AG04449 (cell line): ENCODE measurements at regions of chr6 and their contacts with region 1.

Region 1: DNA sequence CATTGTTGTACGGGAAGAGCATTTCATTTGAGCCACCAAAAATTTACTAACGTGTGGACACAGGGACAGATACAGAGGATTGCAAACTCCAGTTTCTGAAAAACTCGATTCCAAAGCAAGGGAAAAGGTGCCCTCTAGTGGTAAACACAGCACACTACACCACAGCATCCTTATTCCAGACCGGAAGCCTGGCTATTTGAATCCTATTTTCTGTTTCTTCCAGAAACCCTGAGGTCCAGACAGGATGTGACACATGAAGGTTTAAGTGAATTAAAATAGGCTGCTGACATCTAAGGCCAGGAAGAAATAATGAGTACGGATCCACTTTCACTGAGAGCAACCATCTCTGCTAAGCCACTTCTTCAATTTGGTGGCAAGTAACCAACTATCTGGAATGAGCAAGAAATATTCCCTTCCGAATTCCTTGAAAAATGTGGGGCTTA is 31.8 kb upstream of the GMPR start:
- DNase-seq: peak; percentile 65
- H3K4me3 ChIP-seq: no peak overlapping the region
- CTCF ChIP-seq: peak; percentile 85

Region 2: DNA sequence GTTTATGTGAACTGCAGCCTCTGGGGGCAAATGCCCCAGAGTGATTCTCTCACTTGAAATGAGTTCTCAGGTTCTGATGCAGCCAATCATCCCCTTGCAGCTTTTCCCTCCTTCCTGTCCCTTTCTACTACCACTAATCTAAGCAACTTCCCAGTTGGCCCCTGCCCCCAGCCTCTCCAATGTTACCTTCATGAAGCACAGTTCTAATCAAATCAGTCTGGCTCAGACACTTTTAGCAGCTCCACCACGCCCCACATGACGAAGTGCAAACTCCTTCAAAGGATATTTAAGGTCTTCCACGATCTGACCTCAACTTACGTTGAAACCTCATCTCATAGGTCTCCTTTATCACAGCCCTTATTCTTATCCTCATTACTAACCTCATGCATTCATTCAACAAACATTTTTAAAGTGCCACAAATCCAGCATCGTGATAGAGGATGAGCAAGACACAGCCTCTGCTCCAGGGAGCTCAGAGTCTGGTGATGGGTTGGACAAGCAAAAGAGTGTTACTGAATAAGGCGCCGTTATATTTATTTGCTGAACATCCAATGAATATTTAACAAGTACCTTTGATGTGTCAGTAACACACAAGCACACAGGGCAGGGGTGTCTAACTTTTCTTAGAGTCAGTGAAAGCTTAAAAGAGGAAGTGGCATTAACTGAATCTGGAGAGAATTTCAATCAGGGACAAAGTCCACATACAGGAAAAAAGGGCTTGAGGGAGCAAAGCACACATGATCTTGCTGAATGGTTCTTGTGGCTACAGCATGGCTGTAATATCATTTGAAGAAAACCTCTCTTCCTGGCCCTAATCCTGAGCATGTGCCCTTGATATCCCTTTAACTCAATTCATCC is 523.4 kb before region 1 on chr6:
- CTCF ChIA-PET with region 1: interaction called, 18 read pairs
- POLR2A ChIA-PET with region 1: no interaction called
- DNase-seq: no peak
- H3K4me3 ChIP-seq: no peak overlapping the region
- CTCF ChIP-seq: no peak

Region 3: DNA sequence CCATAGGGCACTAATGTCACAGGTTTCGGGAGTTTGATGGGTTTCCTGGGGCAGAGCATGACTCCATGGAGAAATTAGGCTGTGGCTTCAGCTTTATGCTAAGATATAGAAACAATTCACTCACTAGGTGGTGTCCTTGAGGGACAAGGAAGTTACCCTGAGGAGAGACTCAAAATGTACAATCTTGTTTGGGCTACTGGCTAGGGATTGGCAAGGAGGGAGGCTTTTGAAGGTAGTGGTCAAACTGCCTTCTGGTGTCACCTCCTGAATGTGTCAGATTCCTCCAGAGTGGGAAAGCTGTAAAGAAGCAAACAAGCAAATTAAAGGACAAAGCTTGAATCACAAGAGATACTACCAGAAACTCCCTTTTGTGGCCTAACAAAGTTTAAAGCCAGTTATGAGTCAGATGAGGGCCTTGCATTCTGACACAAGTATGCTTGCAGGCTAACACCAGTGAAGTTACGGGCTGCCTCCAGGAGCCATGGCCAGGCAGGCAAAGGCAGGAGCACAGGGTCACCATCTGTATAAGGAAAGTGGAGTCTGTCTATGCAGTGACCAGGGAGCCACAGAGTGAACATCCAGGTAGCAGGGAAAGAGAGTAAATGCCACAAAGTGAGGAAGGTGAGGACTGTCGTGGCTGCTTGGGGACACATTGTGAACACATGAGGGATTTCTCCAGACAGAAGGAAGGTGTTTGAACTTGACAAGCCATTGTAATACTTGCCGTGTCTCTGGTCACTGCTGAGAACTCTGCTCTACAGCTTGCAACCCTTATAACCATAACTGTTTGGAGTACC is 436.1 kb before region 1 on chr6:
- CTCF ChIA-PET with region 1: no interaction called
- POLR2A ChIA-PET with region 1: no interaction called
- DNase-seq: no peak
- H3K4me3 ChIP-seq: no peak overlapping the region
- CTCF ChIP-seq: no peak

Region 4: GRCh38 chr6:15977050-15977449 is 229.6 kb before region 1 on chr6:
- CTCF ChIA-PET with region 1: no interaction called
- POLR2A ChIA-PET with region 1: no interaction called
- DNase-seq: no peak
- H3K4me3 ChIP-seq: no peak overlapping the region
- CTCF ChIP-seq: no peak

Region 5: DNA sequence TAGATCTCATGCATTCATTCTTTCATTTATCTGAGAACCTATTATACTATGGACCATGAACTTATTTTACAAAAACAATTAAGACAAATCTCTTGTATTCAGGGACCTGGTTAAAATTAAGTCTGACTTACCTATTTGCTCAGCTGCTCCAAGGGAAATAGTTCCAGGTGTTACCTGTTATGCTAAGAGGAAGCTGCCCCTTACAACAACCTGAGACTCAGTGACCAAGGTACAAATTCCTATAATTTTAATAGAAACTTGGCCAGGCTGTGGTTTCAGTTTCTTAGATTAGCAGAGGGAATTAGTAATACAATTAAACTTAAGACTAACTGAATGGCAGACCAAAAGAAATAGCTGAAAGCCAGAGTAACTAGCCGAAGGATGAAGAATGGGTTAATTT is 16.4 kb before region 1 on chr6:
- CTCF ChIA-PET with region 1: interaction called, 43 read pairs
- POLR2A ChIA-PET with region 1: no interaction called
- DNase-seq: no peak
- H3K4me3 ChIP-seq: no peak overlapping the region
- CTCF ChIP-seq: no peak

Region 6: DNA sequence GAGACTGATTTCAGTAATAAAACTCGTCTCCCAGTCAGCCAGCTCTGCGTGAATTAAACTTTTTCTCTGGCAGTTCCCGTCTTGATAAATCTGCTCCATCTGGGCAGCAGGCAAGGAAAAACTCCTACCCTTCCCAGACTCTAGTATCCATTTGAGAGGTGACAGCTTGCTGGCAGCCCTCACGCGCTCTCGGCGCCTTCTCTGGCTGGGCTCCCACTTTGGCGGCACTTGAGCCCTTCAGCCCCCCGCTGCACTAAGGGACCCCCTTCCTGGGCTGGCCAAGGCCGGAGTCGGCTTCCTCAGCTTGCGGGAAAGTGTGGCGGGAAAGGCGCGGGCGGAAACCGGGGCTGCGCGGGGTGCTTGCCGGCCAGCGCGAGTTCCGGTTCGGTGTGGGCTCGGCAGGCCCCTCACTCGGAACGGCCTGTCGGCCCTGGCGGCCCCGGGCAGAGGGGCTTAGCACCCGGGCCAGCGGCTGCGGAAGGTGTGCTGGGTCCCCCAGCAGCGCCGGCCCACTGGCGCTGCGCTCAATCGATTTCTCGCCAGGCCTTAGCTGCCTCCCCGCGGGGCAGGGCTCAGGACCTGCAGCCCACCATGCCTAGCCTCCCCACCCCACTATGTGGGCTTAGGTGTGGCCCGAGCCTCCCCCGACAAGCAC is 10.0 kb after region 1 on chr6:
- CTCF ChIA-PET with region 1: interaction called, 29 read pairs
- POLR2A ChIA-PET with region 1: interaction called, 3 read pairs
- DNase-seq: no peak
- H3K4me3 ChIP-seq: no peak overlapping the region
- CTCF ChIP-seq: no peak